Left ventricle myocardium inferior (tissue), 1 donor: ENCODE measurements at regions of chr18 and their contacts with region 1.

Region 1: GRCh38 chr18:6885992-6886796 is 156.7 kb downstream of the ARHGAP28 start:
- DNase-seq: no peak
- H3K4me3 ChIP-seq: no peak overlapping the region
- H3K27ac ChIP-seq: no peak overlapping the region
- H3K4me1 ChIP-seq: no peaks in the 10 kb centered on the region
- H3K27me3 ChIP-seq: no peaks in the 10 kb centered on the region
- CTCF ChIP-seq: peak; percentile 79

Region 2: DNA sequence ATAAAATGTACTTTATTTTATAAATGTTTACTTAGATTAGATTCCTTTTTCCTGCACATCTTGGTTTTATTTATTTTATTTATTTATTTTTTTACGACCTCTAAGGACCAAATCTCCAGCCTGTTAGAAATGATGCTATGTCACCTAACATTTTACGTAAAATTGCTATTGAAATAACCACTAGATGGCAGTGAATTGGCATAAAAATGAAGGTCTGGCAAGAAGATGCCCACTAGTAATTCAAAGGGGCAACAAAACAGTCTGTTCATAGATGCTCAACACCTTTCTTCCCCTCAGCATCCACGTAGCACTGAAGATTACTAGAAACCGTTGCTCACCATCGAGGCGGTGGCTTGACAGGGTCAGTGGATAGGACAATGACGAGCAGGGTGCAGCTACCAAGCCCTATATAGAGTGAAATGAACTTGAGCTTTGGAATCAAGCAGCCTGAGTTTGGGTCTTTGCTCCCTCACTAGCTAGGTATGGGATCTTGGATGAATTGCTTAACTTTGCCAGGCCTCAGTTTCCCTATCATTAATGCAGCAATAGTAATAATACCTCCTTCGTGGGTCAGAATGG is 342.8 kb before region 1 on chr18:
- intact Hi-C with region 1: loop called (anchors 2 kb)
- DNase-seq: no peak
- H3K4me3 ChIP-seq: no peak overlapping the region
- H3K27ac ChIP-seq: no peak overlapping the region
- H3K4me1 ChIP-seq: no peaks in the 10 kb centered on the region
- H3K27me3 ChIP-seq: peaks cover 12% of the 10 kb centered on the region
- CTCF ChIP-seq: peak; percentile 69

Region 3: GRCh38 chr18:7317804-7318231 is 431.6 kb after region 1 on chr18:
- intact Hi-C with region 1: no loop called
- DNase-seq: no peak
- H3K4me3 ChIP-seq: no peak overlapping the region
- H3K27ac ChIP-seq: no peak overlapping the region
- H3K4me1 ChIP-seq: peaks cover 7% of the 10 kb centered on the region
- H3K27me3 ChIP-seq: no peaks in the 10 kb centered on the region
- CTCF ChIP-seq: no peak